BJ (cell line): ENCODE measurements at regions of chr5 and their contacts with region 1.

Region 1: GRCh38 chr5:57499262-57500050 is 16.8 kb upstream of the ACTBL2 start:
- DNase-seq: no peak
- H3K4me3 ChIP-seq: no peak overlapping the region
- H3K27me3 ChIP-seq: no peaks in the 10 kb centered on the region
- CTCF ChIP-seq: peak; percentile 75

Region 2: GRCh38 chr5:57054671-57055070 is 444.8 kb before region 1 on chr5:
- CTCF ChIA-PET with region 1: no interaction called
- POLR2A ChIA-PET with region 1: no interaction called
- DNase-seq: no peak
- H3K4me3 ChIP-seq: no peak overlapping the region
- H3K27me3 ChIP-seq: peaks cover 2% of the 10 kb centered on the region; the same call in 1 of the 2 replicates
- CTCF ChIP-seq: no peak

Region 3: GRCh38 chr5:57298295-57298984 is 201.0 kb before region 1 on chr5:
- CTCF ChIA-PET with region 1: interaction called, 17 read pairs
- POLR2A ChIA-PET with region 1: no interaction called
- DNase-seq: peak; percentile 19
- H3K4me3 ChIP-seq: no peak overlapping the region
- H3K27me3 ChIP-seq: no peaks in the 10 kb centered on the region
- CTCF ChIP-seq: peak; percentile 86

Region 4: DNA sequence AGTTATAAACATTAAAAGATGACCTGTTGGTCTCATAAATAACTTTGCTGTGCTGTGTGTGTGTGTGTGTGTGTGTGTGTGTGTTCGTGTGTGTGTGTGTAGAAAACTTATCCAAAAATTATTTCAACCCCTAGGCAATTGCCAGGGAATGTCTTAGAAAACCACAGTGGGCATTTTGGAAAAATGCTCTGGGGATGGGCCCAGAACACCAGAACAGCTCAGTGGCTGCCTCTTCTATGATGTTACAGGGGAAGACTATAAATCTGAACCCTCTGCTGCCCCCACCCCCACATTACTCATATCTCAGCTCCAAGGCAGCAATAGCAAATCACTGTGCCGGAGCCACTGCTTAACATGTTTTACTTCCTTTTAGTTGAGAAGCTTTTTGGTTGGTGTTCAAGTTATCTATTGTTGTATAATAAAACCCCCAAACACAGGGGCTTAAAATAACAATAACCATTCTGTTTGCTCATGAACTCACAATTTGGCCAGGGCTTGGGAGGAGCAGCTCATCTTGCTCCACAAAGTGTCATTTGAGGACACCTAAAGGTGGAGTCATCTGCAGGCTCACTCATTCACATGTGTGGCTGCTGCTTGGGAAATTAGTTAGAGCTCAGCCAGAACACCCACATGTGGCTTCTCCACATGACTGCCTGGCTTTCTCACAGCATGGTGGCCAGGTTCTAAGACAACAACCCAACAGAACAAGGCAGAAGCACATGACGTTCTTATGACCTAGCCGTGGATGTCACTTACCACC is 57.2 kb before region 1 on chr5:
- CTCF ChIA-PET with region 1: interaction called, 10 read pairs
- POLR2A ChIA-PET with region 1: no interaction called
- DNase-seq: peak; percentile 80
- H3K4me3 ChIP-seq: no peak overlapping the region
- H3K27me3 ChIP-seq: no peaks in the 10 kb centered on the region
- CTCF ChIP-seq: no peak

Region 5: DNA sequence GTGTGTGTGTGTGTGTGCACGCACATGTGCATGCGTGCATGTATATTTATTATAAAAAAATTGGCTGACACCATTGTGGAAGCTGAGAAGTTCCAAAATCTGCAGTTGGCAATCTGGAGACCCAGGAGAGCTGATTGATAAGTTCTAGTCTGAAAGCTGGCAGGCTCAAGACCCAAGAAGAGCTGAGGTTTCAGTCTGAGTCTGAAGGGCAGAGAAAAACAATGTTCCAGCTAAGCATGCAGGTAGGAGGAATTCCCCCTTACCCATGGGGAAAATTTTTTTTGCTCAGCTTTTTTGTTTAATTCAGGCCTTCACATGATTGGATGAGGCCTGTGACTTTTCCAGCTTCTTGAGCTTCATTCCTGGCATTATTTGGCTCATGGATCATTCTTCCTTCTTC is 14.3 kb after region 1 on chr5:
- CTCF ChIA-PET with region 1: interaction called, 25 read pairs
- POLR2A ChIA-PET with region 1: no interaction called
- DNase-seq: no peak
- H3K4me3 ChIP-seq: no peak overlapping the region
- H3K27me3 ChIP-seq: peaks cover 3% of the 10 kb centered on the region; the same call in 1 of the 2 replicates
- CTCF ChIP-seq: no peak

Region 6: GRCh38 chr5:57779383-57780223 is 280.1 kb after region 1 on chr5:
- CTCF ChIA-PET with region 1: interaction called, 50 read pairs
- POLR2A ChIA-PET with region 1: no interaction called
- DNase-seq: no peak
- H3K4me3 ChIP-seq: no peak overlapping the region
- H3K27me3 ChIP-seq: no peaks in the 10 kb centered on the region
- CTCF ChIP-seq: peak; percentile 71